Right cardiac atrium (tissue), 5 donors: ENCODE measurements at regions of chr13 and their contacts with region 1.

Region 1: GRCh38 chr13:112392719-112393118 is 16.6 kb downstream of the SPACA7 start:
- DNase-seq: no peak
- ATAC-seq: no peak
- H3K4me3 ChIP-seq: no peak overlapping the region
- H3K27ac ChIP-seq: no peak overlapping the region
- H3K4me1 ChIP-seq: no peaks in the 10 kb centered on the region
- H3K27me3 ChIP-seq: no peaks in the 10 kb centered on the region

Region 2: DNA sequence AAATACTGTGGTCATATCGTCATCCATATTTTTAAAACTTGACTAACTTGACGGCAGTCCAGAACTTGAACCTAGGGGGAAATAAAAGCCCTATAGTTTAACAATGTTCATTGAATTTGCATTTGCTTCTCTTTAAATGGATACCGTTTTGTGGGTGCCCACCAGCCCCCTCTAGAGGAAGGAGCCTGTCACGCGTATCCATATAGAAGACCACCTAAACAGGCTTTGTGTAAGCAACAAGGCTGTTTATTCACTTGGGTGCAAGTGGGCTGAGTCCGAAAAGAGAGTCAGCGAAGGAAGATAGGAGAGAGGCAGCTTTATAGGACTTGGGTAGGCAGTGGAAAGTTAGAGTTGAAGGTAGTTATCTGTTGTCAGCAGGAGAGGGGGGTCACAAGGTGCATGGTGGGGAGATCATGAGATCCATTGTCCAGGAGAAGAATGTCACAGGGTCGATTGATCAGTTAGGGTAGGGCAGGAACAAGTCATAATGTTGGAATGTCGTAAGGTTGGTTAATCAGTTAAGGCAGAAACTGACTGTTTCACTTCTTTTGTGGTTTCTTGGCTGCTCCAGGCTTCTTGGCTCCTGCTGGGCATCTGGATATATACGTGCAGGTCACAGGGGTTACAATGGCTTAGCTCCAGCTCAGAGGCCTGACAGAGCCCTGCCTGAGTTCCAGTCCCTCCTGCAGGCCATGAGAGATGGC is 1435.4 kb before region 1 on chr13:
- intact Hi-C with region 1: loop called in 1 of 4 experiments (anchors 10 kb)
- DNase-seq: no peak
- ATAC-seq: no peak
- H3K4me3 ChIP-seq: no peak overlapping the region
- H3K27ac ChIP-seq: no peak overlapping the region
- H3K4me1 ChIP-seq: no peaks in the 10 kb centered on the region
- H3K27me3 ChIP-seq: no peaks in the 10 kb centered on the region

Region 3: GRCh38 chr13:112652512-112653070 is 259.9 kb after region 1 on chr13:
- intact Hi-C with region 1: no loop called
- DNase-seq: no peak
- ATAC-seq: no peak
- H3K4me3 ChIP-seq: no peak overlapping the region
- H3K27ac ChIP-seq: no peak overlapping the region
- H3K4me1 ChIP-seq: no peaks in the 10 kb centered on the region
- H3K27me3 ChIP-seq: no peaks in the 10 kb centered on the region